ENCODE measurements at regions of chr11 and their contacts with region 1.

Region 1: DNA sequence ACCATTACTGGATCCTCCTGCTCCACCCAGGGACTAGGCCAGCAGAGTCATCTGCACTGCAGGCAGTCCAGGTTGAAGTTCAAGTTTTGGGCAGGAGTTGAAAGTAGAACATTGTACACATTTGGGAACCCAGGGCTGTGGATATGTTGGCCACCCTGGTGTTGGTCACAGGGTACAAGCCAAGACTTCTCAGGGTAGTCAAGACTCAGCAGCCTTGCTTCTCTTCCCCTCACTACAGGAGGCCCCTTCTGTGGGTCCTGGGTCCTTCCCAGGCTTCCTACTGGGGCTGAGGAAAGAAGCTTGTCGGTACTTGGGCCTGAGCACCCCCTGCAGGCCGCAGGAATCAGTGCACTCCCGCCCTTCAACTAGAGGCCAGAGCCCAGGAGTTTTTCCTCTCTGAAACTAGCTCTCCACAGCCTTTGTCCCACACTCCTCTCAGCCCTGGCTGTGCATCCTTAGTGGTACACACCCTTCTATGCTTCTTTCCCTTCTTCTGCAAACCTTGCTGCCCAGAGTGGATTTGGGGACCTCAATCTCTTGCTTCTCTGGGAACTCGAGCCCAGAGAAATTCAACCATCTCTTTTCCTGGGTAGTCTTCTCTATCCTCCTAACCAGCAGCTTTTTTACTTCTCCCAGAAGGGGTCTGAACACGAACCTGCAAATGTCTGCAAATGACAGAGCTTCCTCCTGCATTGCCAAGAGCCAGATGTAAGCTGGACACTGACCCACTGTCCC is 2.6 kb upstream of the HPX start:
- DNase-seq: no peak

Region 2: GRCh38 chr11:6377902-6378639 is 65.4 kb before region 1 on chr11:
- intact Hi-C with region 1: loop called (anchors 2 to 10 kb)
- DNase-seq: no peak

Region 3: DNA sequence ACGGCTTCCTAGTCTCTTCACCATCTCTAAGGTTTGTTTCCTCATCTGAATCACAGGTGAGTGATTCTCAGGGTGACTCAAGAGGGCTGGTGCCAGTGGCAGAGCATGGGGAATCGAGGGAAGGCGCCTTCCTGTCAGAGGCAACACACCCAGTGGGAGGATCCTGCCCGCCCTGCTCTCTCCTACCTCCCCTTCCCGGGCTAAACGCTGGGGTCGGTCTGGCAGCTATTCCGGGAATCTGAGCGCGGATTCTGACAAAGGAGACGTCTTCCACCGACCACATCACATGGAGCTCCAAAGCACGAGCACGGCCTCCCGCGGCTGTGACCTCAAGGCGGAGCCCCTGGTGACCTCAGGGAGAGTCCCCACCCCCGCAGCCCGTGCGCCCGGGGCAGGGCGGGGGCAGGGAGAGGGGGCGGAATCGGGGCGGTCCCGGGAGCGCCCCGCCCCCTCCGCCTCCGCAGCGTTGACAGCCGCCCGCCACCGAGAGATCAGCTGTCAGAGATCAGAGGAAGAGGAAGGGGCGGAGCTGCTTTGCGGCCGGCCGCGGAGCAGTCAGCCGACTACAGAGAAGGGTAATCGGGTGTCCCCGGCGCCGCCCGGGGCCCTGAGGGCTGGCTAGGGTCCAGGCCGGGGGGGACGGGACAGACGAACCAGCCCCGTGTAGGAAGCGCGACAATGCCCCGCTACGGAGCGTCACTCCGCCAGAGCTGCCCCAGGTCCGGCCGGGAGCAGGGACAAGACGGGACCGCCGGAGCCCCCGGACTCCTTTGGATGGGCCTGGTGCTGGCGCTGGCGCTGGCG is 53.3 kb before region 1 on chr11 and contains the start of gene SMPD1:
- intact Hi-C with region 1: loop called in 1 of 2 experiments (anchors 10 kb)
- DNase-seq: peak; percentile 98
- total RNA-seq, gene SMPD1: 35.4 to 51.6 TPM

Region 4: GRCh38 chr11:6402561-6402981 is 40.9 kb before region 1 on chr11:
- intact Hi-C with region 1: no loop called
- DNase-seq: no peak

Region 5: GRCh38 chr11:6419009-6419631 is 24.3 kb before region 1 on chr11 and contains the start of gene APBB1:
- intact Hi-C with region 1: no loop called
- DNase-seq: peak; percentile 86
- total RNA-seq, gene APBB1: 43.6 to 65.3 TPM

Measured in posterior vena cava (tissue), 2 donors.